Endothelial cell of umbilical vein (primary cell): ENCODE measurements at regions of chr17 and their contacts with region 1.

Region 1: DNA sequence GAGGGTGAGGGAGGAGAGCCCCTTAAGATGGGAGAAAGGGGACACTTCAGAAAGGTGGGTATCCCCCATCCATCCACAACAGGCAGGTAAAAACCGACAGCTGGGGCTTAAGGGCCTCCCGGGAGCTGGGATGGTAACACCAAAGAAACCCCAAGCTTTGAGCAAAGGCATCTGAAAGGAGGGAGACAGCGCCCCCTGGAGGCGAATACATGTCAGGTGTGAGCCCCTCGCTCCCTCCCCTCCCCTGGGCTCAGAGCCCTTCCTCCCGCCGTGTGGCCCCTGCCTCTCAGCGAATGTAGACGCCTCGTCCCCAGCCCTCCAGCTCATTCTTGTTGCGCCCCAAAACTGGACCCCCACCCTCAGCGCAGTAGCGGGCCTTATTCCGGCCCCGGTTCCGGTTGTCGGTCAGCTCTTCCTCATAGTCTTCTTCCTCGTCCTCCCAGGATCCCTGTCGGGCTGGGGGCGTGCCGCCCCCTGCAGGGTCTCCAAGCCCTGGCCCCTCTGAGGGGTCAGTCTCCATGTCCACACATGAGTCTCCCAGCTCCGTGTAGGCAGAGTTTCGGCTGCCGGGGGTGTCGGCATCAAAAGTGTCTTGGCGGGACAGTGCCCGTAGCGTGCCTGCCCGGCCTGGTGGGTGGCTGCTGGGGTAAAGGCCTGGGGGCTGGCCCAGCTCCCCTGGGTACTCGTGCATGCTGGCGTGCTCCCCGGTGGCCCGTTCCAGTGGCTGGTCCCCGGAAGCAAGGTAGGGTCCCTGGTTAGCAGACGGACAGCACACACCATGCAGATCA is 9.1 kb upstream of the ARL5C start:
- DNase-seq: peak; percentile 44
- H3K4me3 ChIP-seq: no peak overlapping the region
- H3K27ac ChIP-seq: no peak overlapping the region
- H3K4me1 ChIP-seq: peaks cover 12% of the 10 kb centered on the region
- H3K27me3 ChIP-seq: no peaks in the 10 kb centered on the region
- CTCF ChIP-seq: peak; percentile 67 to 91
- POLR2A ChIP-seq: no peak

Region 2: GRCh38 chr17:38761612-38762011 is 413.5 kb before region 1 on chr17:
- CTCF ChIA-PET with region 1: interaction called, 12 read pairs
- POLR2A ChIA-PET with region 1: no interaction called
- dilution Hi-C with region 1: no loop called
- intact Hi-C with region 1: no loop called
- DNase-seq: peak; percentile 52
- H3K4me3 ChIP-seq: no peak overlapping the region
- H3K27ac ChIP-seq: no peak overlapping the region
- H3K4me1 ChIP-seq: no peaks in the 10 kb centered on the region
- H3K27me3 ChIP-seq: no peaks in the 10 kb centered on the region
- CTCF ChIP-seq: peak; percentile 54 to 55
- POLR2A ChIP-seq: no peak

Region 3: DNA sequence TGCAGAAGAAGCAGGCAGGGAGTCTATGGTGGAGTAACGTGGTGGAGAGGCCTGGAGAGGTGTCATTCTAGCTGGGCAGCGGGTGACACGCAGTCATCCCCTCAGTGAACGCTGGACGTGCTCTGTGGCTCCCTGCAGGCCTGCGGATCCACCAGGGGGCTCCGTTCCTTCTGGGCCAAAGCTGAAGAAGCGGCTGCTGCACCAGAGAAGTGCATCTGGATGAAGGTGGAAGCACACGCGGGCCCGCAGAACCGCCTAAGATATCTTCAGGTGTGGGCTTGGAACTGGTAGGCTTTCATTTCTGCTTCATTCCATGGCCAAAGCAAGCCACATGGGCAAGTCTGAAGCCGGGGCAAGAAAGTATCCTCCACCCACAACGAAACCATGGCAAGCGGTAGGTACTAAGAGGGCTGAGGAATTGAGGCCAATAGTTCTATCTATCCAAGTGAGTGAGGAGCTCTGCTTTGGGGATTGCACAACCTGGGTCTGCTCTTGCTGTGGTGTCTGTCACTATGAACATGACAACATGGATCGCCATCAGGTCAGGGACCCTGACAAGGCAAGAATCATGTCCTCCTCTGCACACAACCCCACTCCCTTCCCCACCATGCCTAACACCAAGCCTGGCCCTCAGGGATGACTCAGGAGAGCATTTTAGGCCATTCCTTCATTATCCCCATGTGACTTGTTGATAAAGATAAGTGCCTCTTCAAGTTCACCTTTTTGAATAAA is 129.0 kb before region 1 on chr17:
- CTCF ChIA-PET with region 1: no interaction called
- POLR2A ChIA-PET with region 1: no interaction called
- dilution Hi-C with region 1: no loop called
- intact Hi-C with region 1: no loop called
- DNase-seq: no peak
- H3K4me3 ChIP-seq: no peak overlapping the region
- H3K27ac ChIP-seq: peak overlapping the region; percentile 6
- H3K4me1 ChIP-seq: no peaks in the 10 kb centered on the region
- H3K27me3 ChIP-seq: peaks cover 7% of the 10 kb centered on the region in 2 experiments
- CTCF ChIP-seq: no peak
- POLR2A ChIP-seq: no peak

Region 4: DNA sequence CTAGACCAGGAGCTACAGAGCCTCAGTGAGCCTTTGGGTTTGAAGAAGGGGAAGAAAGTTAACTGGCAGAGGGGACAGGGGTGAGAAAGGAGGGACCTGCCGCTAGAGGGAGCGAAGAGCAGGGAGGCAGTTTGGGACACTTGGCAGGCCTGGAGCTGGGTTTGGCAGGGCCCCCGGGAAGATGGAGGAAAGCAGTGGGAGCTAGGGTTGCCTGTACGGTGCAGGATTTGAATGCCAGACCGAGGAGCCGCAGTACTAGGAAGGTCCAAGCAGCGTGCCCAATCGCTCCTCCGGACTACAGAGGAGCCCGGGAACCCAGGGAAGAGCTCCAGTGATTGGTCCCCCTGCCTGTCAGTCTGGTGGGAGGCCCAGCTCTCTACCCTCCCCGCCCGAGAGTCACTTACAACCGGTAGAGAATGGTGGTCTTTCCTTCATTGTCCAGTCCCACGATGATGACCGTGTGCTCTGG is 10.4 kb before region 1 on chr17:
- CTCF ChIA-PET with region 1: interaction called, 121 read pairs
- POLR2A ChIA-PET with region 1: no interaction called
- dilution Hi-C with region 1: no loop called
- intact Hi-C with region 1: no loop called
- DNase-seq: peak; percentile 86
- H3K4me3 ChIP-seq: peak overlapping the region; percentile 2 to 54 (median 36)
- H3K27ac ChIP-seq: no peak overlapping the region
- H3K4me1 ChIP-seq: peaks cover 5% of the 10 kb centered on the region
- H3K27me3 ChIP-seq: peaks cover 27 to 31% of the 10 kb centered on the region in 2 experiments
- CTCF ChIP-seq: peak; percentile 70 to 89
- POLR2A ChIP-seq: no peak

Region 5: GRCh38 chr17:39194089-39194984 is 19.2 kb after region 1 on chr17:
- CTCF ChIA-PET with region 1: interaction called, 14 read pairs
- POLR2A ChIA-PET with region 1: interaction called, 5 read pairs
- dilution Hi-C with region 1: no loop called
- intact Hi-C with region 1: loop called (anchors 2 kb)
- DNase-seq: no peak
- H3K4me3 ChIP-seq: no peak overlapping the region
- H3K27ac ChIP-seq: no peak overlapping the region
- H3K4me1 ChIP-seq: peaks cover 3% of the 10 kb centered on the region
- H3K27me3 ChIP-seq: no peaks in the 10 kb centered on the region
- CTCF ChIP-seq: peak in 1 of 2 donors; percentile 32
- POLR2A ChIP-seq: no peak

Region 6: GRCh38 chr17:39199820-39200069 is 24.6 kb after region 1 on chr17:
- CTCF ChIA-PET with region 1: interaction called, 14 read pairs
- POLR2A ChIA-PET with region 1: interaction called, 5 read pairs
- dilution Hi-C with region 1: no loop called
- intact Hi-C with region 1: loop called (anchors 2 kb)
- DNase-seq: peak; percentile 92
- H3K4me3 ChIP-seq: peak overlapping the region; percentile 81 to 99 (median 96)
- H3K27ac ChIP-seq: peak overlapping the region; percentile 99
- H3K4me1 ChIP-seq: peaks cover 23% of the 10 kb centered on the region
- H3K27me3 ChIP-seq: no peaks in the 10 kb centered on the region
- CTCF ChIP-seq: no peak
- POLR2A ChIP-seq: peak; percentile 46

Region 7: GRCh38 chr17:39235555-39236449 is 60.7 kb after region 1 on chr17:
- CTCF ChIA-PET with region 1: interaction called, 16 read pairs
- POLR2A ChIA-PET with region 1: no interaction called
- dilution Hi-C with region 1: no loop called
- intact Hi-C with region 1: no loop called
- DNase-seq: peak; percentile 53
- H3K4me3 ChIP-seq: no peak overlapping the region
- H3K27ac ChIP-seq: no peak overlapping the region
- H3K4me1 ChIP-seq: peaks cover 3% of the 10 kb centered on the region
- H3K27me3 ChIP-seq: peaks cover 4 to 5% of the 10 kb centered on the region in 2 experiments
- CTCF ChIP-seq: peak; percentile 83 to 85
- POLR2A ChIP-seq: no peak